ENCODE measurements at regions of chr2 and their contacts with region 1.

Region 1: GRCh38 chr2:160269803-160270570 is 69.9 kb upstream of the ITGB6 start:
- DNase-seq: peak; percentile 90
- ATAC-seq: peak; percentile 87

Region 2: DNA sequence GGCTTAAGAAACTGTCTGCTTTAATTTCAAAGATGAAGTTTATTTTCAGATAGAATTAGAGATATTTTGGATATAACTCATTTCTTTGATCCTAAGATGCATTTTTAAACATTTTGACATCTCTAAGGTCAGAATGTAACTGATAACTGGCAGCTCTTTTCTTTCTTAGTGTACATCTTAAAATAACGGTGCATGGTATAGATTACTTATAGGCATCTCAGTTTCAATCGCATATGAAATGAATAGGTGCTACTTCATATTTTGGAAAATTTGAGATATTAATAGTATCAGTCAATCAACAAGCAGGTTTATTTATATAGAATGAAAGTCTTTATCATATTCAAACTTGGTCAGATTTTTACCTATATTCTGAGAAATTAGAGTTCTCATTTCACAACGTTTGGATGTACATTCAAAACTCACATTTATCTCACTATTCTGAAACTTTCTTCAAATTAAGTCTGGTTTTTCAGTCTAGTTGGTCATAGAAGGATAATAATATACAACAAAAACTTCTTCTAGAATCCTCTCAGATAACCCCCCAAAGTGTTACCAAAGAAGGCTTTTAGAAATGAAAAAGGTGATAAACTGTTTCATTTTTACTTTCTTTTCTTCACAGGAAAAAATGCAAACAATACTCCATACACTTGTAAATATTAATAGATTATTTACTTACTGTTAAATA is 860.7 kb before region 1 on chr2:
- intact Hi-C with region 1: no loop called
- DNase-seq: no peak
- ATAC-seq: no peak

Region 3: DNA sequence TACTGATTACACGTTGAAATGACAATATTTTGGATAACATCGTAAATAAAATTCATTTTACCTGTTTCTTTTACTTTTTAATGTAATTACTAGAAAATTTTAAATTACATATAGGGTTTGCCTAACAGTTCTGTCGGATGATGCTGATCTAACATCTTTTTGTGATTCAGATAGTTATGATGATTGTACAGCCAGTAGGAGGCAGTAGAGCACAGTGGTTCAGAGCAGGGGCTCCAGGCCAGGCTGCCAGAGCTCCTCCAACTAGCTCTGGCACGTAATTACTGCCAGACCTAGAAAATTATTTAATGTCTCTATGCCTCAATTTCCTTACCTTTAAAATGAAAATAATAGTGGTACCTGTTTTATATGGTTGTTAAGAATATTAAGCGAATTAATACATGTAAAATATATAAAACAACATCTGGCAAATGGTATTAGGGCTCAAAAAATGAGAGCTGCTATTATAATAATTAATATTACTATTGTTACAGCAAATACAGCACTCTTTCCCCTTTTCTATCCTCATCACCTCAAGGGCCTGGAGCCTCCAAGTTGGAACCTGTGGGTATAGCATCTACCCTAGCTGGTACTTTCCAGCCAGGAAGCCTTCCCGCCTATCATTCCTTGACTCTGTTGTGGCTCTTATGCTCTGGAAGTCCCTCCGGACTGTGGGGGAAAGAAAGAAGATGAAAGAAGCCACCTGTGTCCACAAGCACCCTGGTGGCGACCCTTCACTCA is 159.9 kb before region 1 on chr2:
- intact Hi-C with region 1: loop called (anchors 5 kb)
- DNase-seq: peak; percentile 74
- ATAC-seq: peak; percentile 67

Region 4: GRCh38 chr2:160252278-160252887 is 17.6 kb before region 1 on chr2:
- intact Hi-C with region 1: loop called (anchors 1 kb)
- DNase-seq: no peak
- ATAC-seq: peak; percentile 48

Region 5: GRCh38 chr2:160345071-160345764 is 75.2 kb after region 1 on chr2:
- intact Hi-C with region 1: no loop called
- DNase-seq: no peak
- ATAC-seq: no peak

Region 6: DNA sequence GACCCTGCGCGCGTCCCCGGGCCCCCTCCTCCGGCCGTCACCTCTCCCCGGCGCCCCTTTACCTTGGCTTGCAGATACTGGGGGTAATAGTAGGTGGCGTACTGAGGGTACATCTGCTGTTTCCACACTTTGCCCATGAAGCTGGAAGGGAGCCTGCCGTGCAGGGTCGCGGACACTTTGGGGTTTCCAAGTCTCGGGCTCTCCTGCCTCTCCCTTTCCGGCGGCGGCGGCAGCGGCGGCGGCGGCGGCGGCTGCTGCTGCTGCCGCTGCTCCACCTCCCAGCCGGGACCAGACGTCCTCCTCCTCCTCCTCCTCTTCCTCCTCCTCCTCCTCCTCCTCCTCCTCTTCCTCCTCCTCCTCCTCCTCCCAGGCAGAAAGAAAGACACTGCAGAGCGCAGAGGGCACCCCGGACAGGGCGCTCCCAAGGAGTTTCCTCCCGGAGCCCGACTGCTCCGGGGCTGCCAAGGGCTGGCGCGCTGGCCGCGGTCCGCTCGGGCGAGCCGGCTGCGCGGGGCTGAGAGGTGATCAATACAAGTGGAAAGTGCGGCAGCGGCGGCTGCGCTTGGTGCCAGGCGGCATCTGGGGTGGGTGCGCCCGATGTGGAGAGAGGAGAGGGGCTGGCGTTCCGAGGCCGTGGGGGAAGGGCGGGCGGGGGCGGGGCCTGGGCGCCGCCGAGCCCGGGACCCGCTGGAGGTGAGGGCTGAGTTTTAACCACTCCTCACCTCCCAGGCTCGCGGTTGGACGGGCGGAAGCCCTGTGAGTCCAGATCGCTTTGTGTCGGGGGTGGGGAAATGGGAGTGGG is 223.4 kb after region 1 on chr2 and contains the start of gene RBMS1:
- intact Hi-C with region 1: loop called (anchors 5 kb)
- DNase-seq: peak; percentile 90
- ATAC-seq: peak; percentile 79
- total RNA-seq, gene RBMS1: 58.2 TPM

Region 7: DNA sequence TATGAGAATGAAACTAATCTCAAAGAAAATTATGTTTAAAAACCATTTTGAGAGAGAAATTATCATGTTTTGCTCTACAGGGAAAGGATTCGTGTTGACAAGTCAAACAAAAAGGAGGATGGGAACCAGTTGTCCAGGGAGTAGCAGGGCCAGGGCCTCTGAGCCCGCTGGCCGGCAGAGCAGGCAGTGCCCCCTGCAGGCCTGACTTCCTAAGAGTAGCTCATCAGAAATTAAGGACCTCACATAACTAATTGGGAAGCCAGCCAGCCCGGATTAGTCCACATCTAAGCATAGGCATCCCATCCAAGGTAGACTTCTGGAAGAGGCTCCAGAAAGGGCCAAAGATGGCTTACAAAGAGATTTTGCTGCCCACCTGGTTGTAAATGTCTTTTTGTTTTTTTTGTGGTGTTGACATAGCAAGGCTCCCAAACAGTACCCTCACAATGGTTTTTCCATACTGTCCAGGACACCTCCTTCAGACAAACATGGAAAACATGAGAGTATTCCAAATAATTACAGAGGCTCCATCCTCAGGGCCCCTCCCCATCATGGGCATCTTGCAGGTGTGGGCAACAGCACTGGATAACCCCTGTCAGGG is 649.0 kb after region 1 on chr2:
- intact Hi-C with region 1: loop called (anchors 10 kb)
- DNase-seq: peak; percentile 87
- ATAC-seq: peak; percentile 86

Region 8: GRCh38 chr2:160994141-160995002 is 724.4 kb after region 1 on chr2:
- intact Hi-C with region 1: loop called (anchors 5 kb)
- DNase-seq: no peak
- ATAC-seq: peak; percentile 87